AG04450 (cell line): ENCODE measurements at regions of chr10 and their contacts with region 1.

Region 1: GRCh38 chr10:30722956-30723620 is 93.5 kb upstream of the LYZL2 start:
- DNase-seq: no peak
- H3K4me3 ChIP-seq: no peak overlapping the region
- H3K27ac ChIP-seq: no peak overlapping the region
- H3K27me3 ChIP-seq: no peaks in the 10 kb centered on the region
- CTCF ChIP-seq: no peak

Region 2: DNA sequence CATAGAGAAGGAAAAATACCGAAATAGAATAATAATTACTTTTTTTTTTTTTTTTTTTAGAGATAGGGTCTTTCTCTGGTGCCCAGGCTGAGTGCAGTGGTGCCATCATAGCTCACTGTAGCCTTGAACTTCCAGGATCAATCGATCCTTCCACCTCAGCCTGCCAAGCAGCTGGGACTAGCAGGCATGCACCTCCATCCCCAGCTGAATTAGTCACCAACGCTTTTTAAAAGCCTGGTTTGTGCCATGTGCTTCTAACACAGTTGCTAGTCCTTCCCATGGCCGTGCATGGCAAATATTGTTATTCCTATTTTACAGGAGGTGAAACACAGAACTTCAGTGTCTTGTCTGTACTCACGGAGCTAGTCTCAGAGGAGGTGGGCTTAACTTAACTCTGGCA is 116.8 kb before region 1 on chr10:
- CTCF ChIA-PET with region 1: no interaction called
- POLR2A ChIA-PET with region 1: no interaction called
- DNase-seq: no peak
- H3K4me3 ChIP-seq: no peak overlapping the region
- H3K27ac ChIP-seq: no peak overlapping the region
- H3K27me3 ChIP-seq: peaks cover 2% of the 10 kb centered on the region
- CTCF ChIP-seq: no peak

Region 3: GRCh38 chr10:31883397-31883796 is 1160.3 kb after region 1 on chr10:
- CTCF ChIA-PET with region 1: no interaction called
- POLR2A ChIA-PET with region 1: interaction called, 15 read pairs
- DNase-seq: no peak
- H3K4me3 ChIP-seq: no peak overlapping the region
- H3K27ac ChIP-seq: no peak overlapping the region
- H3K27me3 ChIP-seq: no peaks in the 10 kb centered on the region
- CTCF ChIP-seq: no peak